Activated CD8-positive, alpha-beta T cell treated with anti-CD3 and anti-CD28 coated beads for 36 hours (primary cell): ENCODE measurements at regions of chr6 and their contacts with region 1.

Region 1: DNA sequence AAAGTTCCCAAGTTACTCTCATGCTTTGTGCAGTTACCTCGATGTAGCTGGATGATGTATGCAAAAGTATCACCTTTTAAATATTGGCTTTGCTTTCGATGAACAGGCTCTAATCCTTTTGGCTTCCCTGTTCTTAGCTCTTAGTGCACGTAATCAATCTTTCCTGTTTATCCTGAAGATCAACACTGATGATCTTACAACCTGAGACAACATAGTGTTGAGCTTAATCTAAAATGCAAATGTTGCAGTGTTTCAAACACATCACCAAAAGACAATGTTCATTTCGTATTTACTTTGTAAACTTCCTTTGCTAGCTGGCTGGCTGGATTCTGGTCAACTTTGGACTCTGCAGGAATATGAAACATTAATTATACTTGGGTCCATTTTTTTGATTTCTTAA is 132.1 kb downstream of the THEMIS start:
- DNase-seq: no peak
- ATAC-seq: no peak
- H3K4me3 Mint-ChIP-seq: no peak overlapping the region
- H3K27ac Mint-ChIP-seq: peak overlapping the region; percentile 55
- H3K4me1 Mint-ChIP-seq: peaks cover 57% of the 10 kb centered on the region
- H3K27me3 Mint-ChIP-seq: no peaks in the 10 kb centered on the region
- CTCF ChIP-seq: no peak

Region 2: DNA sequence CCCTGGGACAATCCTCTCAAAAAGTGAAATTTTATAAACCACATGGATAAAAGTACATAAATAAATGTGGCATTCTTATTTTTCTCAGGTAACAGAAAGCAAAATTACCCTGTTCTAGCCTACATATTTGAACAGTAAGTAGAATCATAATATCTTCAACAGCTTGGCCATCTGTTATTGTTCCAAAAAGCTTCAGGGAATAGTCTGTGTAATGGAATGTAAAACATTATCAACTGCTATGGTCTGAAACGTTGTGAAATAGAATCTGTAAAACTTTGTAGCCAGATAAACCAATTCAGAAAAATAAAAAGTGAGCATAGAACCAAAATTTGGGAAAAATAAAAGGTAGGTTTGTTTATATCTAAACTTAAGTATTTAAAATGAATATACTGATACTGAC is 17.4 kb after region 1 on chr6:
- CTCF ChIA-PET with region 1: interaction called, 3 read pairs
- POLR2A ChIA-PET with region 1: interaction called, 10 read pairs
- intact Hi-C with region 1: no loop called
- DNase-seq: no peak
- ATAC-seq: no peak
- H3K4me3 Mint-ChIP-seq: no peak overlapping the region
- H3K27ac Mint-ChIP-seq: no peak overlapping the region
- H3K4me1 Mint-ChIP-seq: peaks cover 83% of the 10 kb centered on the region
- H3K27me3 Mint-ChIP-seq: no peaks in the 10 kb centered on the region
- CTCF ChIP-seq: no peak

Region 3: GRCh38 chr6:128131566-128131965 is 362.8 kb after region 1 on chr6:
- CTCF ChIA-PET with region 1: no interaction called
- POLR2A ChIA-PET with region 1: no interaction called
- intact Hi-C with region 1: no loop called
- DNase-seq: no peak
- ATAC-seq: no peak
- H3K4me3 Mint-ChIP-seq: no peak overlapping the region
- H3K27ac Mint-ChIP-seq: no peak overlapping the region
- H3K4me1 Mint-ChIP-seq: no peaks in the 10 kb centered on the region
- H3K27me3 Mint-ChIP-seq: no peaks in the 10 kb centered on the region
- CTCF ChIP-seq: no peak